CD8-positive, alpha-beta memory T cell (primary cell): ENCODE measurements at regions of chr1 and their contacts with region 1.

Region 1: DNA sequence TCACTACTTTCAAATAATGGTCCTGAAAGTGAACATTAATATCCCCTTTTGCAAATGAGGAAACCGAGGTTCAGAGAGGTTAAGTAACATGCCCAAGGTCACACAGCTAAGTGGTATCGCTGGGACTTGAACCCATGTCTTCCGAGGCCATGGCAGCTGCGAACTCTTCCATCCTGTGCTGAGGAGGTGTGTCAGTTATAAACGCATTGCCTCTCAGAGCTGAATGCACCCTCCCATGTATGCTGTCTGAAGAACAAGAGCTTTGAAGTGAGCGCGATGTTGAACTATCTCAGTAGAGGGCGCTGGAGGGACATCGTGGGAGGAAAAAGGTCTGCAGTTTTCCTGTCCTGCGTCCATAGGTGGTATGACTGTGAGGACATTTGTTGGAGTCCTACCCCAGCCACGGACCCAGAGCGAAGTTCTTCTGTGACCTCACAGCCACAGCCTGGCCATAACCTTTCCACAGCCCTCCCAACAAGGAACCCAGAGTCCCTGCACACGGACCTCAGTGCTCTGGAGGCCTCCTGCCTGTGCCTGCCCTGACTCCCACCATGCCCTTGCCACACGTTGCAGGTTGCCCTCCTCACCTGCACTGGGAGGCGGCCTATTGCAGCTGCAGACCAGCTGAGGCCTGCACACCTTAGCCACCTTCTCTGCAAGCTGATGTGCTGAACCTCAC is 7.5 kb downstream of the MYOC start:
- DNase-seq: peak; percentile 12 to 62 (median 38)
- H3K4me3 ChIP-seq: no peak overlapping the region
- H3K4me3 Mint-ChIP-seq: peak overlapping the region in 2 of 7 donors; percentile 20 to 30
- H3K27ac ChIP-seq: no peak overlapping the region
- H3K27ac Mint-ChIP-seq: peak overlapping the region in 1 of 8 donors; percentile 27
- H3K4me1 ChIP-seq: no peaks in the 10 kb centered on the region
- H3K4me1 Mint-ChIP-seq: peaks cover 6 to 10% (median 10%) of the 10 kb centered on the region in 3 donors
- H3K27me3 ChIP-seq: no peaks in the 10 kb centered on the region
- H3K27me3 Mint-ChIP-seq: peaks cover 4 to 5% of the 10 kb centered on the region in 2 donors

Region 2: GRCh38 chr1:170790651-170791071 is 854.3 kb before region 1 on chr1:
- CTCF ChIA-PET with region 1: no interaction called
- POLR2A ChIA-PET with region 1: no interaction called
- DNase-seq: no peak
- H3K4me3 ChIP-seq: no peak overlapping the region
- H3K4me3 Mint-ChIP-seq: no peak overlapping the region
- H3K27ac ChIP-seq: no peak overlapping the region
- H3K27ac Mint-ChIP-seq: no peak overlapping the region
- H3K4me1 ChIP-seq: no peaks in the 10 kb centered on the region
- H3K4me1 Mint-ChIP-seq: no peaks in the 10 kb centered on the region
- H3K27me3 ChIP-seq: no peaks in the 10 kb centered on the region
- H3K27me3 Mint-ChIP-seq: peaks cover 0 to 4% of the 10 kb centered on the region in 2 donors

Region 3: DNA sequence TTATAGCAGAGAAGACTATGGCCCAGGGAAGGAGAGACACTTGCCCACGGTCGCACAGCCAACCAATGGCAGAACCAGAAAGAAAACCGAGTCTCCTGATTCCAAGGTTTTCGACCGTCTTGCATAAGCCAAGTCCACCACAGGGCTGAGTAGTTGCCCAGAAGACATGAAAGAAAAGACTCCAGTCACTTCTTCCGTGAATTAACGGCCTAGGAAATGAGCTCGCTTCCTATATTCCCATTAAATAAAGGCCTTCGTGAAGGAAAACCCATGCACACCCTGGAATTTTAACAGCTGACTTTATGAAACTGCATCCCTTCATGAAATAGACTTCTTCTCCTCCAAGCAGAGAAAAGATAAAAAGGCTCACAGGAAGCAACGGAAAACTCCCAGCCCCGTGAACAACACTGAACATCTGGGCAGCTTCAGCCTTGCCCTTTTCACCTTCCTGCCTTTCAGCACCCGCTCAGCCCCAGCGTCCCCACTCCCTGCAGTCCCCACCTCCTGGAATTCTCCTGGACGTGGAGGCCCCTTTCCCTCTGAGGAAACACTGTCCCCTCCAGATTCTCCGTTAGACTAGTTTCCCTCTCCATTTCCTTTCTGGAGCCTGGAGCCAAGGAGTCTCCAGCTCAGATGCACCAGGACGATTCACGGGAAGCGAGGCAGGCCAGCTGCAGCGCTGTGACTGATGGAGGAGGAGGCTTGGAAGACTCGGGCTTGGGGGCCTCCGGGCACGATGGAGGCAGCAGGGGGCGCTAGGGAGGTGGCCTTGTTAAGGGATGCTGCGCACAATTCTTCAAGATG is 10.2 kb after region 1 on chr1:
- CTCF ChIA-PET with region 1: interaction called, 16 read pairs
- POLR2A ChIA-PET with region 1: no interaction called
- DNase-seq: peak; percentile 26 to 70 (median 45)
- H3K4me3 ChIP-seq: no peak overlapping the region
- H3K4me3 Mint-ChIP-seq: peak overlapping the region in 6 of 7 donors; percentile 26 to 71 (median 54)
- H3K27ac ChIP-seq: no peak overlapping the region
- H3K27ac Mint-ChIP-seq: no peak overlapping the region
- H3K4me1 ChIP-seq: peaks cover 6% of the 10 kb centered on the region
- H3K4me1 Mint-ChIP-seq: peaks cover 7 to 10% (median 10%) of the 10 kb centered on the region in 3 donors
- H3K27me3 ChIP-seq: peaks cover 10% of the 10 kb centered on the region
- H3K27me3 Mint-ChIP-seq: peaks cover 16 to 60% of the 10 kb centered on the region in 2 donors

Region 4: GRCh38 chr1:171984850-171985485 is 340.0 kb after region 1 on chr1:
- CTCF ChIA-PET with region 1: interaction called, 22 read pairs
- POLR2A ChIA-PET with region 1: no interaction called
- DNase-seq: peak in 2 of 5 donors; percentile 32 to 33
- H3K4me3 ChIP-seq: no peak overlapping the region
- H3K4me3 Mint-ChIP-seq: no peak overlapping the region
- H3K27ac ChIP-seq: no peak overlapping the region
- H3K27ac Mint-ChIP-seq: no peak overlapping the region
- H3K4me1 ChIP-seq: no peaks in the 10 kb centered on the region
- H3K4me1 Mint-ChIP-seq: peaks cover 0 to 2% (median 0%) of the 10 kb centered on the region in 3 donors
- H3K27me3 ChIP-seq: no peaks in the 10 kb centered on the region
- H3K27me3 Mint-ChIP-seq: peaks cover 1 to 11% of the 10 kb centered on the region in 2 donors